Aorta (tissue), 5 donors: ENCODE measurements at regions of chr7 and their contacts with region 1.

Region 1: DNA sequence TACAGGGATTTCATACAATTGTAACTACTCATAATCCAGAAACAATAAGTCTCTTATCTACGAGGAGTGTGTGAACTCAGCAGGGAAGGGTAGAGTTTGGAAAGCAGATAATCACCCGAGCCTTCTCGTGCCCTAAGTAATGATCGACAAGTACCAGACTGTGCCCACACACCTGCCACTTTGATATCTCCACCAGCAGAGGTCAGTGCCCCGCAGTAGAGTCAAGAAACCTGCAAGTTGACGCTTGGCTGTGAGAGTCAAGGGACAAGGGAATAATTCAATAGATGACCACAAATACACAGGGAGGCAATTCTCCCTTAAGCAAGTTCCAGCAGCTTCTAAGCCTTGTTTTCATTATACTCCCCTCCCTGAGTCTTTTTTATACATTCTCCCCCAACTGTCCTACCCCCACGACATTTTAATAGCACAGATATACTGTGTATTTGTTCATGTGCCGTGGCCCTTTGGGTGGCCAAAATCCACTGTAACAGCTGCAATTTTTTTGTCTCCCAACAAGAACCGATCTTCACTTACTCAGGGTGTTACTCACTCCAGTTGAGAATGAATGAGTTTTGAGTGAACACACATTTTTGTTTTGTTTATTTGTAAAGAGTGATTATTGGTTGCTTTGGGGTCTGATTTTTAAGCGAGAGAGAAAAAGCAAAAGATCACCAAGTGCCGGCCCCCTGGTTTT is 106.9 kb upstream of the RHEB start:
- DNase-seq: no peak
- ATAC-seq: no peak
- H3K4me3 ChIP-seq: no peak overlapping the region
- H3K27ac ChIP-seq: no peak overlapping the region
- H3K4me1 ChIP-seq: peaks cover 1 to 11% of the 10 kb centered on the region in 2 donors
- H3K27me3 ChIP-seq: no peaks in the 10 kb centered on the region

Region 2: GRCh38 chr7:151459726-151460473 is 166.7 kb before region 1 on chr7:
- intact Hi-C with region 1: loop called in 1 of 2 experiments (anchors 10 kb)
- DNase-seq: peak; percentile 85 to 93
- ATAC-seq: peak; percentile 93
- H3K4me3 ChIP-seq: no peak overlapping the region
- H3K27ac ChIP-seq: peak overlapping the region in 1 of 2 donors; percentile 85
- H3K4me1 ChIP-seq: no peaks in the 10 kb centered on the region
- H3K27me3 ChIP-seq: no peaks in the 10 kb centered on the region

Region 3: DNA sequence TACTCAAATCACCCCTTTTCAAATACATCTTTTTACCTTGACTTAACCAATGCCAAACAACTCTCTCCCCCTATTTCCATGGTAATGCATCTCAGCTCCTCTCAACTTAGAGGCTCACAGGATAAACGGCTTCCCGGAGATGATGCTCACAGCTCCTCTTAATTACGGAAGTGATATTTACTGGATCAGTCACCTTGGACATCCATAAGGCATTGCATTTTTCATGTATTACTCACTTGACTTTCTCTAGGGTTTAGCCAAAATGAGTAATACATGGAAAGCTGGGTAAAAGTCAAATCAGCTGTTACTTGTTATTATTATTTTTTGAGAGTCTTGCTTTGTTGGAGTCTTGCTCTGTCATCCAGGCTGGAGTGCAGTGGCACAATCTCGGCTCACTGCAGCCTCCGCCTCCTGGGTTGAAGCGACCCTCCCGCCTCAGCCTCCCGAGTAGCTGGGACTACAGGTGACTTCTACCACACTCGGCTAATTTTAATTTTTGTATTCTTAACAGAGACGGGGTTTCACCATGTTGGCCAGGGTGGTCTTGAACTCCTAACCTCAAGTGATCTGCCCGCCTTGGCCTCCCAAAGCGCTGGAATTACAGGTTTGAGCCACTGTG is 33.6 kb before region 1 on chr7:
- intact Hi-C with region 1: loop called in 1 of 2 experiments (anchors 5 kb)
- DNase-seq: peak in 1 of 2 donors; percentile 71
- ATAC-seq: peak; percentile 33
- H3K4me3 ChIP-seq: no peak overlapping the region
- H3K27ac ChIP-seq: no peak overlapping the region
- H3K4me1 ChIP-seq: peaks cover 2 to 3% of the 10 kb centered on the region in 2 donors
- H3K27me3 ChIP-seq: no peaks in the 10 kb centered on the region

Region 4: DNA sequence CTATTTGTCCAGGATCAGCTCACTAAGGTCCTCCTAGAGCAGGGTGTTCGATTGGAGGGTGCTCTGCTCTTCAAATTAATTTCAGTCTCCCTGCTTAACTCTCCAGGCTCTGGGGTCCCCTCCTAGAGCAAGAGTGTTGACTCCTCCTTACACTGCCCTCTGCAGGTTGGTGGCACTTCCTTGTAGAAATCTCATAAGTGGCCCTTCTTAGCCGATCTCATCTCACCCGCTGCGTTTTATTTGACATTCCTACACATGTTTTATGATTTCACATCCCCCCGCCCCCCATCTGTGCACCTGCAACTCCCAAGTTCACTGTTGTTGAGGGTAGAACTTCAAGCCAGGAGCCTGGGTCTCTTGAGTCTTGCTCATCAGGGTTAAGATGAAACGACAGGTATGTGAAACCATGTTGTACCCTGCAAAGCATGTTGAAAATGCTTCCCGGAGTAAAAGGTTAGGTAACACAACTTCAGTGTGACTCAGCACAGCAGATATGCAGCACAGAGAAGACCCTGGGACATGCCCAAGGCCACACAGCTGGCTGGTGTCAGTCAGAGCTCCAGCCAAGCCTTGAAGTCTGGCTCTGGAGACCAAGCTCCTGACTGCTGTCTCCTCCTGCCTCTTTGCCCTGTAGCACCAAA is 79.2 kb after region 1 on chr7:
- intact Hi-C with region 1: loop called (anchors 5 kb)
- DNase-seq: no peak
- ATAC-seq: no peak
- H3K4me3 ChIP-seq: no peak overlapping the region
- H3K27ac ChIP-seq: no peak overlapping the region
- H3K4me1 ChIP-seq: no peaks in the 10 kb centered on the region
- H3K27me3 ChIP-seq: no peaks in the 10 kb centered on the region

Region 5: DNA sequence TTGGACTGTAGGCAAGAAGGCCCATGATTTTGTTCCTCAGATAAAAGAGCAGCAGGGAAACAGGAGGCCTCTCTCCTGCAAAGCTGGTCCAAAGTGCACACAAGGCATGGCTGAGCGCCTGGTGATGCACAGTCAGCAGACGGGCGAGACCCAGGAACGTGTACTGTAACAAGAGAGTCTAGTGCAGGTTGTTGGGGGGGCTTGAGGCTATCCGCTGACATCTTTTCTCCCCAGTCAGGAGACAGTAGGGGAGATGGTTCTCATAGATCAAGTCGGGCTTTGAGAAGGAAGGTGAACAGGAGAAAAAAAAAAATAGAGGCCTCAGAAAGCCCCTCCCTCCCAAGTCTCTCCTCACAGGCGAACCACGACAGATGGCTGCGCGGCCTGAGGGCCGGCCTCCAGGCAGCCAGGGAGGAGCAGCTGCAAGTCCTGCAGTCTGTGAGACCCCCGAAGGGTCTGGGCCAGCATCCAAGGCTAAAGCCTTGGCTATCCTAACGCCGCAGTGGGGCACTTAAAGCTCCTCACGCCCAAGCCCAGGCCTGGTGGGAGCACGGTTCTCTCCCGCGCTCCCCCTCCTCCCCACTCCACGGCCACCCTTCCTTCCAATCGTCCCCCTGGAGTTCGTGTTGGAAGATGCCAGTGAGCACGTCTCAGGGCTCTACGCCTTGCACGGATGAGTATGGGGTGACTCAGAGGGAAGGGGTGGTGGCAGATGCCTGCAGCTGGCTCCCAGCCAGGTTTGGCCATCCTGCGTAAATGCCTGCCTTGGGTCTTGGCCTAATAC is 182.0 kb after region 1 on chr7:
- intact Hi-C with region 1: no loop called
- DNase-seq: peak; percentile 54 to 57
- ATAC-seq: no peak
- H3K4me3 ChIP-seq: no peak overlapping the region
- H3K27ac ChIP-seq: no peak overlapping the region
- H3K4me1 ChIP-seq: no peaks in the 10 kb centered on the region
- H3K27me3 ChIP-seq: no peaks in the 10 kb centered on the region